ENCODE measurements at regions of chr7 and their contacts with region 1.

Region 1: GRCh38 chr7:129091484-129092002 is 36.6 kb upstream of the TNPO3 start:
- DNase-seq: peak; percentile 79 to 92
- ATAC-seq: peak; percentile 84
- H3K4me3 ChIP-seq: no peak overlapping the region
- H3K27ac ChIP-seq: no peak overlapping the region
- H3K4me1 ChIP-seq: no peaks in the 10 kb centered on the region
- H3K27me3 ChIP-seq: no peaks in the 10 kb centered on the region

Region 2: DNA sequence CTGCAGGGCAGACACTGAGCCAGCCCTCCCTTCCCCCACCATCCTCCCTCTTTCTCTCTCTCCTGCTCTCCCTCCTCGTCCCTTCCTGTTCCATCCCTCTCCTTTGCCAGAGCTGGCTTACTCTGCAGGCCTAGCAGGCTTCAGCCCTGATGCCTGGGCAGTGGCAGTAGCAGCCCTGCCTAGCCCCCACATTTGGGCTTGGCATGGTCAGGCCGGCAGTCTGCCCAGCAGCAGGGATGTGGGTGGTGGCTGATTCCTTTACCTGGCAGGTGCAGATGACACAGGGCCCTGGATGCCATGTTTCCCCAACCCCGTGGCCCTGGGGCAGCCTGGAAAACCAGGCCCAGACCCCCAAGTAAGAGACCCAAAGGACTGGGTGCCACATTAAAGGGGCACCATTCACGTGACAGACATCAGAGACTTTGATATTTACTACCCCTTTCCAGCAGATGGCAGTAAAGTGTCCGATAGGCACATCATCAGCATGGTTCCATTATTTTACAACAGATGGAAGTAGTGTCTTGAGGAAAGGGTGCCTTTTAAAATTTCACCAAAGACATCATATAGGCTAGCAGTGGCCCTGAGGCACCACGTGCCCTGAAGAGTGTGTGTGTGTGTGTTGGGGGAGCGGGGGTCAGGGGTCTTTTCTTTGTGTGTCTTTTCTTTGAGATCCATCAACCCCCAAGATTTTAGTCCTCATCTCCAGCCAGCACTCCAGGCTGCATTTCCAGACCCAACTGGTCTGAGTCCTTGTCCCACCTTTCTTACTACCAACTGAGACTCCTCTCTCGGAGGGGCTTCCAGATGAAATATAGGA is 187.0 kb before region 1 on chr7:
- intact Hi-C with region 1: loop called (anchors 5 kb)
- DNase-seq: no peak
- ATAC-seq: no peak
- H3K4me3 ChIP-seq: no peak overlapping the region
- H3K27ac ChIP-seq: no peak overlapping the region
- H3K4me1 ChIP-seq: no peaks in the 10 kb centered on the region
- H3K27me3 ChIP-seq: no peaks in the 10 kb centered on the region

Region 3: GRCh38 chr7:129202058-129202777 is 110.7 kb after region 1 on chr7:
- intact Hi-C with region 1: no loop called
- DNase-seq: peak in 1 of 2 donors; percentile 59
- ATAC-seq: no peak
- H3K4me3 ChIP-seq: no peak overlapping the region
- H3K27ac ChIP-seq: no peak overlapping the region
- H3K4me1 ChIP-seq: no peaks in the 10 kb centered on the region
- H3K27me3 ChIP-seq: no peaks in the 10 kb centered on the region

Region 4: DNA sequence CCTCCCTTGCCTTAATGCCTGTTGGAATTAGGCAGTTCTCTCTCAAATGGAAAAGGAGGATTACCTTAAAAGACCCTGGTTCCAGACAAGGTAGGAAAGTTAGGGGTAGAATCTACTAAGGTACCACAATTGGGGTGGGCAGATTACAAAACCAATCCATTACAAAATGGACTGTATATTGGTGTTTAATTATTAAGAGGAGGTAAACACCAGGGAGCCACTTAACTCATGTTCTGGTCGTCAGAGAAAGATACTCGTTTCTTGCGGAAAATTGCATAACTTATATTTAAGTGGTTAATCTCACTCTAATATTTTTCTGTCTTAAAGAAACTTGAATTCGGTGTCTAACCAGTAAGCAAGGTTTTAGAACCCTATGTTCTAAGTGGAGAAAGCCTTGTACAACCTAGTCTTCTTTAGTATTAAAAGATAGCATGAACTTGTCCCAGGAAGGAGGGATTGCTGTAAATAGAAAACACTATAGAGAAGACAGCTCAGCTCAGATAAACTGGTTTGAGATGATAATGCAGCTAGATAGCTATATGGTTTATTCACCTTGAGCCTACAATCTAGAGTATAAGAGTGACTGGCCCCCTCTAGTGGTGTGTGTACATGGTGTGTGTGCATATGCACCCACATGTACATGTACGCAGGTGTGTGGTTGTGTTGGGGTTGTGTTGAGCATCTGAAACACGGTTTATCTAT is 284.7 kb after region 1 on chr7:
- intact Hi-C with region 1: no loop called
- DNase-seq: no peak
- ATAC-seq: no peak
- H3K4me3 ChIP-seq: no peak overlapping the region
- H3K27ac ChIP-seq: no peak overlapping the region
- H3K4me1 ChIP-seq: no peaks in the 10 kb centered on the region
- H3K27me3 ChIP-seq: no peaks in the 10 kb centered on the region

Region 5: DNA sequence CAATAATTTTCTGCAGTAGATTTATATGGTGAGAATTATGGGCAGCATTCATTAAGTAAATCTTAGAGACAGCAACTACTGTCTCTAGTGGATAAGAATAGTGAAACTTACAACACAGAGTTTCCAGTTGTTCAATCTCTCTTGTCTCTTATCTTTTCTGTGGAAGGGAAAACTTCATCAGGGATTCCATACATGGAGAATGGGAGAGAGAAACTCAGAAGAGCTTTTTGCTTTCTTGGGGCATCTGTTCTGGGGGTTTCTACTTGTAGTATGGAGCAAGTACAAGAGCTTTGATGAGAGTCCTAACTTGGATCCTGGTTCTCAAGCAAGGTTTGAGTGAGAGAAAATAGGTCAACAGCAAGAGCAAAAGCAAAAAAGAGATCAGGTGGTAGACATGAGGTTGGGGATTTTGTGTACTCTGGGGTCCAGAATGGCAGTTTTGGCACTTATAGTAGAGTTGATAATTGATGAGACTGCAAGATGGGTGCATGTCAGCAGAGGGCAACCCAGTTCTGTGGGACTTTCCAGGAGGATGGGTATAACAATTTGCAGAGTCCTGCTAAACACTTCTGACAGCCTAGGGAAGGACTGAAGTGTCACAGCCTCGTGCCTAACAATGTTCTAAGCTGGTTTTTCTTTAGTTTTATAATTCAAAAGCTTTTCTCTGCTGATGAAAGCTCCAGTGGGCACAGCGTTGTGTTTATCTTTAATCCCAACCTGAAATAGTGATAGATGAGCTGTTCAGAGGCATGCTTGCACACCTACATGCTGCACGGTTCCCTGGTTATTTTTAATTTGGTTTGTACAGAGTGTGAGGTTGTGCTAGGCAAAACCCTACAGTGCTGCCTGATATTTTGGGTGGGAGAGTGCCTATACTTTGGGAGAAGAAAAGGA is 310.7 kb after region 1 on chr7:
- intact Hi-C with region 1: no loop called
- DNase-seq: no peak
- ATAC-seq: no peak
- H3K4me3 ChIP-seq: no peak overlapping the region
- H3K27ac ChIP-seq: no peak overlapping the region
- H3K4me1 ChIP-seq: no peaks in the 10 kb centered on the region
- H3K27me3 ChIP-seq: no peaks in the 10 kb centered on the region

Region 6: DNA sequence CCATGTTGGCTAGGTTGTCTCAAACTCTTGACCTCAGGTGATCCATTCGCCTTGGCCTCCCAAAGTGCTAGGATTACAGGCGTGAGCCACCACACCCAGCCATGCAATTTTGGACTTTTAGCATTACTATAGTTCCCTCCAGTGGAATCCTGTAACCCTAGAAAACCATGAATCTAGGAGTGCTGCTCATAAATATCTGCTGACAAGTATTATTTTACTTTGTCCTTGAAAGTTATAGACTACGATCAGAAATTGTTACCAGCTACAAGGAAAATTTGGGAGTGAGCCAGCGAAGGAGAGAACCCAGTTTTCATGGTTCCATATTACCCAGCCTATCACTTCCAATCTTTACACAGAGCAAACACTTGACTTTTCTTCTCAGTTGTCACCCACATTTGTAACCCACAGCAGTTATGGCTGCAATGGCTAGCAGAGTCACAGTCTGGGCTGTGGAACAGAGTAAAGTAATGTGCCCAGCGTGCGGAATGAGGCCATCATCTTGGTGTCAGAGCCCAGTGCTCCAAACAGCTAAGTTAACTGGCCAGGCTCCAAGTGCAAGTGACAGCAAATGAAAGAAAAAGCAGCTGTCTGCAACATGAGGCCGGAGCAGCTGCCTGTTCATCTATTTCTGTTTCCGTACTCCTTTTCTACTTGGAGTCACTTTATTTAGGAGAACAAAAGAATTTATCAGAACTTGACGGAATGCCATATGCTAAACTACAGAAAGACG is 929.7 kb after region 1 on chr7:
- intact Hi-C with region 1: no loop called
- DNase-seq: no peak
- ATAC-seq: no peak
- H3K4me3 ChIP-seq: no peak overlapping the region
- H3K27ac ChIP-seq: no peak overlapping the region
- H3K4me1 ChIP-seq: no peaks in the 10 kb centered on the region
- H3K27me3 ChIP-seq: no peaks in the 10 kb centered on the region